ENCODE measurements at regions of chr7 and their contacts with region 1.

Region 1: GRCh38 chr7:36967387-36967786 is 243.1 kb upstream of the AOAH start:
- DNase-seq: peak; percentile 68 to 72
- H3K4me3 ChIP-seq: no peak overlapping the region
- H3K4me3 Mint-ChIP-seq: no peak overlapping the region
- H3K27ac Mint-ChIP-seq: no peak overlapping the region
- H3K4me1 ChIP-seq: peaks cover 23% of the 10 kb centered on the region
- H3K4me1 Mint-ChIP-seq: peaks cover 35% of the 10 kb centered on the region
- H3K27me3 ChIP-seq: no peaks in the 10 kb centered on the region
- H3K27me3 Mint-ChIP-seq: no peaks in the 10 kb centered on the region
- CTCF ChIP-seq: peak; percentile 63 to 70

Region 2: GRCh38 chr7:36898186-36898585 is 69.2 kb before region 1 on chr7:
- CTCF ChIA-PET with region 1: interaction called, 5 read pairs
- POLR2A ChIA-PET with region 1: no interaction called
- intact Hi-C with region 1: loop called (anchors 2 kb)
- DNase-seq: no peak
- H3K4me3 ChIP-seq: no peak overlapping the region
- H3K4me3 Mint-ChIP-seq: peak overlapping the region; percentile 26
- H3K27ac Mint-ChIP-seq: peak overlapping the region; percentile 83
- H3K4me1 ChIP-seq: peaks cover 19% of the 10 kb centered on the region
- H3K4me1 Mint-ChIP-seq: peaks cover 27% of the 10 kb centered on the region
- H3K27me3 ChIP-seq: no peaks in the 10 kb centered on the region
- H3K27me3 Mint-ChIP-seq: no peaks in the 10 kb centered on the region
- CTCF ChIP-seq: no peak

Region 3: DNA sequence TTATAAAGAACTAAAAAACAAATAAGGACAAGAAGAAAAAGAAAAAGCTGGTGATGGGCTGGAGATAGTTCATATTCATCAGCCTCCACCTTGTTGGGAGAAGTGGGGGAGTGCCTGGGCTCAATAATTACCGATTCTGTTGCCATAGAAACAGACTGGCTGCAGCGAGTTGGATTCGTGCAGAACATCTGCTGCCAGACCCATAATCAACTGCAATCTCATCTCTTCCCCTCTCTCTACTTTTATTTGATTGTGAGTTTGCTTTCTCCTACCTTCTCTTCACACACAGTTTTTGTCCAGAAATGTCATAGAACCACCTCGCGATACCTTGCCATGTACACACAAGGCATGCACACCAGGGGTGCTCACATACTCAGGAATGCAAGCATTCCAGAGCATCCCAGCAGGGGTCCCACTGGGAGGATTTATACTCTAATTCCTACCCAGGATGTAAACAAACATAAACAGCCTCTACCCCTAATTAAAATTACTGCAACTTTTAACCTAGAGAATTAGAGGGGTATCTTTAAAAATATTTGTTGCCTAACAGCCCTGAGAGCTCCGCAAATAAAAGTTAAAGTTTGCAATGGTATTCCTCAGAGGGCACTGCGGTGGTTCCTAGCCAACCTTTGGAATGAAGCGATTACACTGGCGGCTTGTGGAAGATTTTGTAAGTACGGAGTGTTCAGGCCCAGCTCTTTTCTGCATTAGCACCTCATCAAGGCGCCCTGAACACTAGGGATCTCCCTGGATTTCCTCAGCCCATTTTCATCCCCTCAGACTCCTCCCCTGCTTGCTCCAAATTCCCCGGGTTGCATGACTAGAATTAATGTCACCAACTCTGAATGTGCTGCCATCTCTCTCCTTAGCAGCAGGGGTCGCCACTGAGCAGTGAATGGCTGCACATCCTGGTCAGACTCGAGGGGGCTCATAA is 19.3 kb after region 1 on chr7:
- CTCF ChIA-PET with region 1: interaction called, 10 read pairs
- POLR2A ChIA-PET with region 1: interaction called, 4 read pairs
- intact Hi-C with region 1: no loop called
- DNase-seq: peak; percentile 58 to 60
- H3K4me3 ChIP-seq: no peak overlapping the region
- H3K4me3 Mint-ChIP-seq: no peak overlapping the region
- H3K27ac Mint-ChIP-seq: no peak overlapping the region
- H3K4me1 ChIP-seq: peaks cover 9% of the 10 kb centered on the region; the same call in 1 of the 2 replicates
- H3K4me1 Mint-ChIP-seq: no peaks in the 10 kb centered on the region
- H3K27me3 ChIP-seq: no peaks in the 10 kb centered on the region
- H3K27me3 Mint-ChIP-seq: no peaks in the 10 kb centered on the region
- CTCF ChIP-seq: peak; percentile 43 to 83

Region 4: GRCh38 chr7:37052705-37053104 is 85.3 kb after region 1 on chr7:
- CTCF ChIA-PET with region 1: interaction called, 4 read pairs
- POLR2A ChIA-PET with region 1: no interaction called
- intact Hi-C with region 1: loop called (anchors 1 kb)
- DNase-seq: peak; percentile 72 to 81
- H3K4me3 ChIP-seq: no peak overlapping the region
- H3K4me3 Mint-ChIP-seq: no peak overlapping the region
- H3K27ac Mint-ChIP-seq: no peak overlapping the region
- H3K4me1 ChIP-seq: peaks cover 7% of the 10 kb centered on the region; the same call in 1 of the 2 replicates
- H3K4me1 Mint-ChIP-seq: no peaks in the 10 kb centered on the region
- H3K27me3 ChIP-seq: no peaks in the 10 kb centered on the region
- H3K27me3 Mint-ChIP-seq: no peaks in the 10 kb centered on the region
- CTCF ChIP-seq: no peak

Region 5: GRCh38 chr7:37181550-37181932 is 214.2 kb after region 1 on chr7:
- CTCF ChIA-PET with region 1: interaction called, 58 read pairs
- POLR2A ChIA-PET with region 1: no interaction called
- intact Hi-C with region 1: loop called (anchors 1 kb)
- DNase-seq: no peak
- H3K4me3 ChIP-seq: no peak overlapping the region
- H3K4me3 Mint-ChIP-seq: no peak overlapping the region
- H3K27ac Mint-ChIP-seq: no peak overlapping the region
- H3K4me1 ChIP-seq: peaks cover 14% of the 10 kb centered on the region
- H3K4me1 Mint-ChIP-seq: no peaks in the 10 kb centered on the region
- H3K27me3 ChIP-seq: no peaks in the 10 kb centered on the region
- H3K27me3 Mint-ChIP-seq: no peaks in the 10 kb centered on the region
- CTCF ChIP-seq: no peak

Region 6: DNA sequence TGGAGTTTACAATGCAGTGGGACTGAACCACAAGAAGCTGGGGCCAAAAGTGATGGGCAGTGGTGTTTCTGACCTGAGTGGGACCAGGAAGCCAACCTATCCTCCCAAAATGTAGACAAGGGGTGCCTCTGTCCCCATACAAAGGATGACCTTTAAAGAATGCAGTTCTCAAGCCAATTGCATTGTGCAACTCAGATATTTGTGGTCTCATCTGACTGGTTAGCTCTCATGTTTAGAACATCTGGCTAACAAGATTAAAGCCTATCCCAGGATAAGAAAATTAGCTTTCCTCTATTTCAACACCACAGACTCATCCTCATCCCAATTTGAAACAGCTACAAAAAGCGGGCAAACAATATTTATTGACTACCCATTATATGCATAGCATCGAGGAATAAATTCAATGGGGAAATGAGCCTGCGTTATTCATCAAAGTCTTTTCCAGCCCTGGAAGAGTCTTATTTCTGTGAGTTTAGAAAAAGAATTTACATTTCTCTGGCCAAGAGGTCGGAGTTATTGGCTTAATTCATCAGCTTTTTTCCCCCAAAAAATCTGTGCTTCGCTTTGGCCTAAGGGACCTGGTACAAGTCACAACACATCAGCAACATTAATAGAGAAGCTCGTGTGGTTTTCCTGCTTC is 454.6 kb after region 1 on chr7:
- CTCF ChIA-PET with region 1: no interaction called
- POLR2A ChIA-PET with region 1: no interaction called
- intact Hi-C with region 1: no loop called
- DNase-seq: no peak
- H3K4me3 ChIP-seq: no peak overlapping the region
- H3K4me3 Mint-ChIP-seq: no peak overlapping the region
- H3K27ac Mint-ChIP-seq: no peak overlapping the region
- H3K4me1 ChIP-seq: no peaks in the 10 kb centered on the region
- H3K4me1 Mint-ChIP-seq: no peaks in the 10 kb centered on the region
- H3K27me3 ChIP-seq: no peaks in the 10 kb centered on the region
- H3K27me3 Mint-ChIP-seq: peaks cover 16% of the 10 kb centered on the region
- CTCF ChIP-seq: no peak

Measured in Caco-2 (cell line).